Activated naive CD4-positive, alpha-beta T cell treated with anti-CD3 and anti-CD28 coated beads, Interleukin-2, amount 10 ng/mL, durations not matched to agents 7 days and 5 days (primary cell): ENCODE measurements at regions of chr9 and their contacts with region 1.

Region 1: DNA sequence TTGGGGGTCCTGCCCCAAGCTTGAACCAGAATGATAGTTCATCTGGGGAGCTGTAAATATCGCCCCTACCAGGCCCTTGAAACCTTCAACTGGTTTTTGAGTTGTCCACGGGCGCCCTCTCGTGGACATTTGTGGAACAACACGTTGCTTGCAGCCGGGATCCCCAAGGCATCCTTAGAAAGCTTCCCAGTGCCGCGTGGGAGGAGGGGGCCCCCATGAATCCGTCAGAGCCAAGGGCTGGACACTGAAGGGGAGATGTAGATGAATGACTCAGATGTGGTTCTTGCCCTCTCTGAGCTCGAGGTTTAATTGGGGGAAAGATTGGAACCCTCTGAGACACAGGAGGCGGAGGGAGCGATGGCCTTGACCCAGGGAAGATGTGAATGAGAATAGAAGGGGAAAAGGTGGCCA is 31.8 kb upstream of the ORM1 start:
- DNase-seq: peak; percentile 80
- H3K4me3 Mint-ChIP-seq: no peak overlapping the region
- H3K27ac Mint-ChIP-seq: peak overlapping the region; percentile 42
- H3K4me1 Mint-ChIP-seq: no peaks in the 10 kb centered on the region
- H3K27me3 Mint-ChIP-seq: peaks cover 17% of the 10 kb centered on the region

Region 2: DNA sequence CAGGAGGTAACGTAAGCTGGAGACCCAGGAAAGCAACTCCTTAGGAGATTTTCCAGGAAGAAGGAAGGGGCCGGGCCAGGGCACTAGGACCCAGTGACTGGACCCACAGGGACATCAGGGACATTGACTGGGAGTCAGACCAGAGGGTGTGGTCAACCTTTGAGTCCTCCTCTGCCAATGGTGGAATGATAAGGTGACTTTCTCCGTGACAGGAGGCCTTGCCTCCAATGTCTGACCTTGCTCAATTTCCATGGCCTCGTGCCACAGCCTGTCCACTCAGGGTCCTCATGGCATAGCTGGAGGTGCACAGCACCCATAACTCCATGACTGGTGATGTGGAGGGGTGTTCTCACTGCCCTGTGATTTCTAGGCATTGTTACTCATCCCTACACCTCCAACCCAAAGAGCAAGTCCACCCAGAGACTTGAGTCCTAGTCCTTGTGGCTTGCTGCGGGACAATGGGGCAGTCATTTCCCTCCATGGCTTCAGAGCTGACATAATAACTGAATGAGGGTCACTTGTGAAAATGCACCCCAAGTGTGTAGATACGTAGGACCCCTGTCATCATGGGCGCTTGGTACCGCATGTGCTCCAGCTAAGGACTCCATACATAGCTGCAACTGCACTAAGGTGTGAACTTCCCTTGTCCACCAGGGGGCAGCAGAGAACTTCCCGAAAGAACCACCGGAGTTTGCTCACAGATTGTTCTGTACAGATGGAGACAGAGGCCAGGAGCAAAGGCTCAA is 208.9 kb before region 1 on chr9:
- CTCF ChIA-PET with region 1: interaction called, 44 read pairs
- DNase-seq: peak; percentile 89
- H3K4me3 Mint-ChIP-seq: no peak overlapping the region
- H3K27ac Mint-ChIP-seq: no peak overlapping the region
- H3K4me1 Mint-ChIP-seq: no peaks in the 10 kb centered on the region
- H3K27me3 Mint-ChIP-seq: peaks cover 9% of the 10 kb centered on the region

Region 3: DNA sequence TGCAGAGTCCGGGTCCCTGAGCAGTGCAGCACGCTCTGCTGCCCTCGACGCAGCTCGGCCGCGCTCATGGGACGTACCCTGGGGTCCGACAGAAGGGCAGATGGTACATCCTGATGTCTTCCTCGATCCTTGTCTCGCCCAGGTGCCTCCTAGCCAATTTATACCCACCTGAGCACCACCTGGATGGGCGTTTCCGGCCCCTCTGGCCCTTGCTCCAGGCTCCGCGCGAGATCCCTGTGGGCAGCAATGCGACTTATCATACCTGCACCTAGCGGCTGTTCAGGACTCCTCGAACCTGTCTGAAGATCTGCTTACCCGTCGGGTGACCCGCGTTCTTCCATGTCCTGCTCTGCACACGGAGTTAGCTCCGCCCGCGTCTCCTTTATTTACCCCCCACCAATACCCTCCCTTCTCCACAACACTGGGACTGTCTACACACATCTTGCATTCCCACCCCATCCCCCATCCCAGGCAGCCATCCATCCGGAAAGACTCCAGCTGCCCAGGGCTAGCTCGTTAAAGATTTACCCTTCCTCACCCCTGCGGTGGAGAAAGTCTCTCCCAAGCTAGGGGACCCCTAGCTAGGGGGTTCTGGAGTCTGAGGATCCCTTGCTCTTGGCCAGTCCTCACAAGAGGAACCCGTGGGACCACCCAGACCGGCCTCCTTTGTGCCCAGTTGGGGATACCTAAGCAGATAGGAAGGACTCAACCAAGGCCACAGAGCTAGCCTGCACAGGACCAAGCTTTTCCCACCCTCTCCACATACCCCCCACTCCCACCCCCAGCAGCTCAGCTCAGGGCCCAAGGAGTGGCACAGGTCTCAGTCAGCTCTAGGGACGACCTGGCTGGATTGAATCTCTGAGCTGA is 191.9 kb before region 1 on chr9 and contains the start of gene KIF12:
- CTCF ChIA-PET with region 1: interaction called, 10 read pairs
- DNase-seq: no peak
- H3K4me3 Mint-ChIP-seq: no peak within 1 kb of the TSS
- H3K27ac Mint-ChIP-seq: no peak within 1 kb of the TSS
- H3K4me1 Mint-ChIP-seq: no peaks in the 10 kb centered on the region
- H3K27me3 Mint-ChIP-seq: peaks cover 58% of the 10 kb centered on the region

Region 4: DNA sequence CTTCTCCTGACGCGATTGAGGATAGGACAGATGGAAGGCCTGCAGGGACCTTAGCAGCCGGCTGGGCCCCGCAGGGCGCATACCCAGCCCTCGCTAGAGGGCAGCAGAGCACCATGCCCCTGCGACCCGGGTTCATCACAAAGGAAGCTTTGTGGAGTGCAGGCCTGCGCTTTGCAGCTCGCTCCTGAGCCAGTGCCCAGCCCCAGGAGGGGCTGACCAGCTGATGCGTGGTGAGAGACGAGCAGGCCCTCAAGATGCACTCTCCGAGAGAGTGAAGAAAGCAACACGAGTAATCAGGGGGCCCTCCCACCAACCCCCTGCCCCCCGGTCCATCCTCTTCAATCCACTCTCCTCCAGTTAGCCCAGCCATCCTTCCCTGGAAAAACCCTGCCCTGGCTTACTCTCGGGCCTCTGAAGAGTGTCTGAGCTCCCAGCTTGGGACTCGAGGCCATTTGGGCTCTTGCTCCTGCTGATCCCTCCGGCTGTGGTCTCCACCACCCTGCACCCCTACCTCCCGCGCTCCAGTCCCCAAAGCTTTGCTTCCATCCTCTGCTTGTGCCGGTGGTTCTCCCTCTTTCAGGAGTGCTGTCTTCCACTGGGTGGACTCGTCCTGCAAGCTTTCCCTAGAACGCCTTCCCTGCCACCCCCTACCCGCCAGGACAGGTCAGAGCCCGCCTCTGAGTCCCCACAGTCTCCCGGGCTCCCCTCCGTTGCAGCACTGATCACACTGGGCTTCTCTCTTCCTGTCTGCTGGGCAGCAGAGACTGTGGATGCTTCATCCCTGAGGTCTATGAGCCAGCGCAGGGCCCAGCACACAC is 182.8 kb before region 1 on chr9:
- CTCF ChIA-PET with region 1: interaction called, 88 read pairs
- DNase-seq: peak; percentile 74
- H3K4me3 Mint-ChIP-seq: no peak overlapping the region
- H3K27ac Mint-ChIP-seq: peak overlapping the region; percentile 53
- H3K4me1 Mint-ChIP-seq: no peaks in the 10 kb centered on the region
- H3K27me3 Mint-ChIP-seq: peaks cover 29% of the 10 kb centered on the region

Region 5: DNA sequence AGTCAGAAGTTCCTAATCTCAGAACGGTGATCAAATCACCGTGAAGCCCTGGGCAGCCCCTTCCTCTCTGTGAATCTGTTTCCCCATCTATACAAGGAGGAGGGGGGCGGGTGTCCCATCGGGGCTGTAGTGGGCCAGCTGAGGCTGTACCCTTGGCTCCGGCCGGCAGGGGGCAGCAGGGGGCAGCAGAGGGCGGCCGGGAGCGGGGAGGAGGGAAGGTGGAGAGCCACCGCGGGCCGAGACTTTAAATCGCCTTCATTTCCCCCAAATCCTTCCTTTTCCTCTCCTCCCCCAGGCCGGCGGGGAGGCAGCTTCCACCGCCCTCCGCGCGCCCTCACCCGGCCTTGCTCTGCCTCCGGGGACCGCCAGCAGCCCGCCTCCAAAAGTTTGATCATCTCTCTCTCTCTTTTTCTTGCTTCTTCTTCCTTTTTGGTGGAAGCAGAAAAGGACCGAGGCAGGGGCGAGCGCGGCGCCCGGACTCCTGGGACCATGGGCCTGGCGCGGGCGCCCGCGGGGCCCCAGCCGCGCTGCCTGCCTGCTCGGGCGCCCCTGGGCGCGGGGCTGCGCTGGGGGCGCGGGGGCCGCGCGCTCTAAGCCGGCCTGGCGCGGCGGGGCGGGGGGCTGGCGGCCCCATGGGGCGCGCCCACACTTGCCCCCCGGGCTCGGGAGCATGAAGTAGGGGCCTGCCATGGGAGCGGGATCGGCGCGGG is 135.7 kb before region 1 on chr9 and contains the start of gene COL27A1:
- CTCF ChIA-PET with region 1: interaction called, 27 read pairs
- DNase-seq: peak; percentile 85
- H3K4me3 Mint-ChIP-seq: peak within 1 kb of the TSS; percentile 72
- H3K27ac Mint-ChIP-seq: peak within 1 kb of the TSS; percentile 11
- H3K4me1 Mint-ChIP-seq: peaks cover 17% of the 10 kb centered on the region
- H3K27me3 Mint-ChIP-seq: peaks cover 84% of the 10 kb centered on the region

Region 6: GRCh38 chr9:114229295-114229694 is 61.8 kb before region 1 on chr9:
- CTCF ChIA-PET with region 1: no interaction called
- DNase-seq: no peak
- H3K4me3 Mint-ChIP-seq: no peak overlapping the region
- H3K27ac Mint-ChIP-seq: no peak overlapping the region
- H3K4me1 Mint-ChIP-seq: no peaks in the 10 kb centered on the region
- H3K27me3 Mint-ChIP-seq: peaks cover 13% of the 10 kb centered on the region